H1 (cell line): ENCODE measurements at regions of chr3 and their contacts with region 1.

Region 1: GRCh38 chr3:146589899-146590508 is 15.1 kb downstream of the PLSCR5 start:
- DNase-seq: no peak
- H3K4me3 ChIP-seq: no peak overlapping the region
- H3K27ac ChIP-seq: no peak overlapping the region
- H3K4me1 ChIP-seq: no peaks in the 10 kb centered on the region
- H3K27me3 ChIP-seq: no peaks in the 10 kb centered on the region
- CTCF ChIP-seq: peak in 2 of 3 experiments; percentile 28 to 45; a peak in 2 of 4 replicates
- EP300 ChIP-seq: no peak
- POLR2A ChIP-seq: no peak
- RAD21 ChIP-seq: peak; percentile 53 to 58

Region 2: DNA sequence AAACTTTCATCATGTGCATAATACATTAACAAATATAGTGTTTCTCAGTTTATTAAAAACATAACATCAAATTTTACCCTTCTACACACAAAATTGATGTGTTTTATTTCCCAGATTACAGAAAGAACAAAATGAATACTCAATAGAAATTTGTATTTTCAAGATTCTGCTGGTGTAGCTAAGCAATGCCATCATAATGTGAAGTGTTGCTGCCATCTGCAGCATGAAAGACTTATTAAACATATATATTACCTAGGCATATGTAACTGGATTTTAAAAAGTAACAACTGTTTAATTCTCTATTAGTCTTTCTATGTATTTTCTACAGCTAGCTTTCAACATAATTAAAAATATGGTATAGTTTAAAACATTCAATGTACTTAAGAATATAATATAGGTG is 12.3 kb before region 1 on chr3:
- CTCF ChIA-PET with region 1: interaction called, 11 read pairs
- POLR2A ChIA-PET with region 1: no interaction called
- DNase-seq: no peak
- H3K4me3 ChIP-seq: no peak overlapping the region
- H3K27ac ChIP-seq: no peak overlapping the region
- H3K4me1 ChIP-seq: no peaks in the 10 kb centered on the region
- H3K27me3 ChIP-seq: no peaks in the 10 kb centered on the region
- CTCF ChIP-seq: peak in 2 of 3 experiments; percentile 22 to 28; a peak in 2 of 4 replicates
- EP300 ChIP-seq: no peak
- POLR2A ChIP-seq: no peak
- RAD21 ChIP-seq: peak; percentile 72 to 77